HAP-1 (cell line): ENCODE measurements at regions of chr11 and their contacts with region 1.

Region 1: GRCh38 chr11:123407130-123407995 is 22.7 kb upstream of the GRAMD1B start:
- DNase-seq: peak; percentile 76 to 84
- H3K4me3 ChIP-seq: no peak overlapping the region
- H3K4me1 ChIP-seq: peaks cover 4% of the 10 kb centered on the region
- H3K27me3 ChIP-seq: no peaks in the 10 kb centered on the region

Region 2: DNA sequence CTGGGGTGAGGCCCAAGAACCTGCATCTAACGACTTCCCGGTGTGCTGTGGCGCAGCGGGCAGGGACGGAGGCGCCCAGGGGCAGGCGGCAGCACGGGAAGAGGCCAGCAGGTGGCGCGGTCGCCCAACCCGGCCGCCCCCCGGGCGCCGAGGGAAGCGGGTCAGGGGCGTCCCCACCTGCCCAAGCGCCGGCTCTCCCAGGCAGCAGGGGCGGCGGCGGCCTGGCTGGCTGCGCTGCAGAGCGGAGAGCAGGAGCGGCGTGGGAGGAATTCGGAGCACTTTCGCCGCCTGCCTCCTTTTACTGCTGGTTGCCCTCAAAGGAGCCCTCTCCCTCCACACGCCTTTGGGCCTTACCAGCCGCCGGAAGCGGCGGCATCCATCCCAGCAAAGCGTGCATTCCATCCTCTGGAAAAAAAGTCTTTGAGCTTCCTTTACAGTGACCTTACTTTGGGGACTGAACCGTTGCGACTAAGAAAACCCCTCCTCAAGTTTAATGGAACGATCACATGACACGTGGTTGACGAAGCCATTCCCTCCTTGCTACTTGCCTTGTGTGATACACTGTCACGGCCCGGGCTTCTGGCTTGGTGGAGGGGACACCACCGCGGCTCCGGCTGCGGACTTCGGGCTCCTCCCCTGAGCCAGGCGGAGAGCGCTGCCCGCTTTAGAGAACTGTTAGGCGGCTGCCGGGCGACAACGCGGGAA is 105.5 kb before region 1 on chr11:
- in situ Hi-C with region 1: loop called (anchors 5 kb)
- DNase-seq: peak; percentile 68 to 81
- H3K4me3 ChIP-seq: no peak overlapping the region
- H3K4me1 ChIP-seq: peaks cover 3% of the 10 kb centered on the region; the same call in 1 of the 2 replicates
- H3K27me3 ChIP-seq: no peaks in the 10 kb centered on the region